Activated CD4-positive, alpha-beta memory T cell treated with anti-CD3 and anti-CD28 coated beads, Interleukin-2, amount 10 ng/mL, durations not matched to agents 7 days and 5 days (primary cell): ENCODE measurements at regions of chr9 and their contacts with region 1.

Region 1: GRCh38 chr9:109950710-109951443 is 170.9 kb downstream of the PALM2AKAP2 start:
- DNase-seq: no peak
- H3K4me3 Mint-ChIP-seq: no peak overlapping the region
- H3K27ac Mint-ChIP-seq: peak overlapping the region; percentile 64
- H3K4me1 Mint-ChIP-seq: peaks cover 28% of the 10 kb centered on the region
- H3K27me3 Mint-ChIP-seq: peaks cover 2% of the 10 kb centered on the region

Region 2: DNA sequence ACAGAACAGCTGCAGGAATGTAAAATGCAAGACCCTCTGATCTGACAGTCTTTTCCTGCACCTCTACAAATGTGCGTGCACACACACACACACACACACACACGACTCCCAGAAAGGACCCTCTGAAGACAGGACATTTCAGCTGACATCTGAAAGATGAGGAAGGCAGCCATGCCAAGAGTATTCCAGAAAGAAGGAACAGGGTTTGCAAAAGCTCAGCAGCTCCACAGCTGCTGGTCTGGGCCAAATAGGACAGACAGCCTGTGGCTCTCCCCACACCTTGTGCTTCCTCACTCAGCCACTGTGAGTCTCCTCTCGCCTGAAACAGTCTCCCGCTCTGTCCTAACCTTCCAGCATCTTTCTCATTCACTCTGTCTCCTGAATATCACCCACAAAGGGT is 18.1 kb after region 1 on chr9:
- CTCF ChIA-PET with region 1: interaction called, 3 read pairs
- POLR2A ChIA-PET with region 1: interaction called, 19 read pairs
- DNase-seq: no peak
- H3K4me3 Mint-ChIP-seq: no peak overlapping the region
- H3K27ac Mint-ChIP-seq: peak overlapping the region; percentile 29
- H3K4me1 Mint-ChIP-seq: peaks cover 60% of the 10 kb centered on the region
- H3K27me3 Mint-ChIP-seq: peaks cover 7% of the 10 kb centered on the region

Region 3: DNA sequence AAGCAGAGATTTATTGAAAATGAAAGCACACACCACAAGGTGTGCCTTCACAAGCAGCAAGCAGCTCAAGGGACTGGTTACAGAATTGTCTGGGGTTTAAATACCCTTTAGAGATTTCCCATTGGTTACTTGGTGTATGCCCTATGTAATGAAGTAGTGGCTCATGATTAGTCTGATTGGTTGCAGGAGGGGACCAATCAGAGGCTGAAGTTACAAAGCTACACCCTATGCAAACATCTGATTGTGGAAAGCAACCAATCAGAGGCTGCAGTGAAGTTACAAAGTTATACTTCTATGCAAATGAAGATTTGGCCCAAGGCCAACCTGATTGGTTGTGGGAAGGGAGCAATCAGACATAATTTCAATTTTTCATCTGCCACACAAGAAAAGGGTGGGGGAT is 137.2 kb after region 1 on chr9:
- CTCF ChIA-PET with region 1: no interaction called
- POLR2A ChIA-PET with region 1: no interaction called
- DNase-seq: no peak
- H3K4me3 Mint-ChIP-seq: no peak overlapping the region
- H3K27ac Mint-ChIP-seq: no peak overlapping the region
- H3K4me1 Mint-ChIP-seq: peaks cover 25% of the 10 kb centered on the region
- H3K27me3 Mint-ChIP-seq: no peaks in the 10 kb centered on the region